Activated T-helper 2 cell treated with anti-CD3 and anti-CD28 coated beads, Interferon-gamma antibody, Interleukin-2, Interleukin-4, amounts not matched to agents 10 μg/mL and 5 μg/mL and 100 μg/mL, durations not matched to agents 14 hours and 24 hours and 36 hours (primary cell): ENCODE measurements at regions of chr11 and their contacts with region 1.

Region 1: GRCh38 chr11:6377902-6378639 is 12.2 kb upstream of the SMPD1 start:
- DNase-seq: no peak
- H3K4me3 Mint-ChIP-seq: no peak overlapping the region
- H3K27ac Mint-ChIP-seq: peak overlapping the region; percentile 60
- H3K4me1 Mint-ChIP-seq: peaks cover 26% of the 10 kb centered on the region
- H3K27me3 Mint-ChIP-seq: no peaks in the 10 kb centered on the region

Region 2: GRCh38 chr11:6443269-6444003 is 65.4 kb after region 1 on chr11:
- intact Hi-C with region 1: loop called (anchors 1 kb)
- DNase-seq: peak; percentile 27
- H3K4me3 Mint-ChIP-seq: no peak overlapping the region
- H3K27ac Mint-ChIP-seq: no peak overlapping the region
- H3K4me1 Mint-ChIP-seq: no peaks in the 10 kb centered on the region
- H3K27me3 Mint-ChIP-seq: peaks cover 10% of the 10 kb centered on the region

Region 3: GRCh38 chr11:6481012-6481923 is 103.2 kb after region 1 on chr11 and contains the starts of genes ARFIP2 and TIMM10B:
- intact Hi-C with region 1: loop called (anchors 2 kb)
- DNase-seq: peak; percentile 97
- H3K4me3 Mint-ChIP-seq: peak within 1 kb of the TSS; percentile 88
- H3K27ac Mint-ChIP-seq: peak within 1 kb of the TSS; percentile 93
- H3K4me1 Mint-ChIP-seq: peaks cover 25% of the 10 kb centered on the region
- H3K27me3 Mint-ChIP-seq: no peaks in the 10 kb centered on the region
- total RNA-seq, gene ARFIP2: 46.8 and 48.6 TPM in 2 replicates
- total RNA-seq, gene TIMM10B: 42.9 and 43.0 TPM in 2 replicates

Region 4: GRCh38 chr11:6505577-6506240 is 127.6 kb after region 1 on chr11:
- intact Hi-C with region 1: loop called (anchors 1 kb)
- DNase-seq: no peak
- H3K4me3 Mint-ChIP-seq: no peak overlapping the region
- H3K27ac Mint-ChIP-seq: no peak overlapping the region
- H3K4me1 Mint-ChIP-seq: peaks cover 3% of the 10 kb centered on the region
- H3K27me3 Mint-ChIP-seq: no peaks in the 10 kb centered on the region